ENCODE measurements at regions of chr17 and their contacts with region 1.

Region 1: GRCh38 chr17:73365906-73366623 is 54.3 kb upstream of the CDC42EP4 start:
- DNase-seq: peak in 6 of 7 donors; percentile 24 to 96 (median 46)
- H3K4me3 ChIP-seq: no peak overlapping the region
- H3K27ac ChIP-seq: peak overlapping the region in 4 of 5 donors; percentile 24 to 85 (median 58)
- H3K4me1 ChIP-seq: peaks cover 0 to 17% of the 10 kb centered on the region in 2 donors
- H3K27me3 ChIP-seq: no peaks in the 10 kb centered on the region
- CTCF ChIP-seq: no peak
- POLR2A ChIP-seq: peak; percentile 31 to 33

Region 2: GRCh38 chr17:73203135-73203787 is 162.8 kb before region 1 on chr17:
- intact Hi-C with region 1: loop called in 1 of 2 experiments (anchors 5 kb)
- DNase-seq: peak in 4 of 7 donors; percentile 42 to 59 (median 48)
- H3K4me3 ChIP-seq: no peak overlapping the region
- H3K27ac ChIP-seq: peak overlapping the region in 1 of 5 donors; percentile 9
- H3K4me1 ChIP-seq: peaks cover 0 to 20% of the 10 kb centered on the region in 2 donors
- H3K27me3 ChIP-seq: no peaks in the 10 kb centered on the region
- CTCF ChIP-seq: no peak
- POLR2A ChIP-seq: no peak

Region 3: DNA sequence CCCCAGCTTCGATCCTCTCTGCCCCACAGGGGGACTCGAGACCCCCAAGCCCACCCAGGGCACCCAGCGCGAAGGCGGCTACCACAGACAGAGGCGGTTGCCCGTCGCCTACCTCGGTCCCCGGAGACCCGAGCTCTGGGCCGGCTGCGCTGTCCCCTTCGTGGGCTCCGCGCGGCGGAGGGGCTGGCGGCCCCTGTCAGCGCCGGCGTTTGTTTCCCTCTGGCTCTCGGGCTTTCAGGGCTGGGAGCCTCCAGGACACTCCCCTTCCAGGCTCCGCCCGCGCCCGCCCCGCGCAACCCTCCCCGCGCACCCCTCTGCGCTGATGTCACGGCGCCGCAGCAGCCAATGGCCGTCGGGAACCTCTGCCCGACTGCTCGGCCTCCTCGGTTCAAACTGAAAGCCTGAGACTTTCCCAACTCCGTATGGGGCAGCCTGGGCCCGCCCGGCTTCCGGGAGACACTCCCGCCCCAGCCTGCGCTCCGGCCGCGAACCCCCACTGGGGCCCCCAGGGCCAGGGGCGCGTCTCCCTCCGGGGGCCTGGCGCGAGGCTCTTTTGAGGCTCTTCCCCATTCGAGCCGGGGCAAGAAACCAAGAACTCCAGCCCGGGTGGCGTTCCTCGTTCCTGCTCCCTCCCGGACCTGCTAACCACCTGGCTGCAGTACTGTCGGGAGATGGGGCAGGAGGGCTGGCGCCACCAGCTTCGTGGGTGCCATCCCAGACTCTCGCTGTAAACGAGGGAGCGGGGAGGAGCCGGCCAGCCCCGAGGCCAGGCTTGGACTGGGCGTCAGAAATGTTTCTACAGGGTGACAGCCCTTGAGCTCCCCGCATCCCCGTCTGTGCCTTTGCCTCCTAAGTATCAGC is 54.1 kb before region 1 on chr17 and contains the start of gene CDC42EP4:
- intact Hi-C with region 1: loop called in 1 of 2 experiments (anchors 5 kb)
- DNase-seq: peak; percentile 96 to 98 (median 97)
- H3K4me3 ChIP-seq: peak within 1 kb of the TSS; percentile 61 to 99 (median 92)
- H3K27ac ChIP-seq: peak within 1 kb of the TSS; percentile 93 to 99 (median 98)
- H3K4me1 ChIP-seq: peaks cover 29 to 35% of the 10 kb centered on the region in 2 donors
- H3K27me3 ChIP-seq: no peaks in the 10 kb centered on the region
- CTCF ChIP-seq: peak in 1 of 6 experiments; percentile 4
- POLR2A ChIP-seq: peak; percentile 97 to 100
- total RNA-seq, gene CDC42EP4: 37.0 to 172 (median 112) TPM

Measured in adrenal gland (tissue), 19 donors.